Activated CD4-positive, alpha-beta T cell treated with anti-CD3 and anti-CD28 coated beads for 36 hours (primary cell): ENCODE measurements at regions of chr11 and their contacts with region 1.

Region 1: DNA sequence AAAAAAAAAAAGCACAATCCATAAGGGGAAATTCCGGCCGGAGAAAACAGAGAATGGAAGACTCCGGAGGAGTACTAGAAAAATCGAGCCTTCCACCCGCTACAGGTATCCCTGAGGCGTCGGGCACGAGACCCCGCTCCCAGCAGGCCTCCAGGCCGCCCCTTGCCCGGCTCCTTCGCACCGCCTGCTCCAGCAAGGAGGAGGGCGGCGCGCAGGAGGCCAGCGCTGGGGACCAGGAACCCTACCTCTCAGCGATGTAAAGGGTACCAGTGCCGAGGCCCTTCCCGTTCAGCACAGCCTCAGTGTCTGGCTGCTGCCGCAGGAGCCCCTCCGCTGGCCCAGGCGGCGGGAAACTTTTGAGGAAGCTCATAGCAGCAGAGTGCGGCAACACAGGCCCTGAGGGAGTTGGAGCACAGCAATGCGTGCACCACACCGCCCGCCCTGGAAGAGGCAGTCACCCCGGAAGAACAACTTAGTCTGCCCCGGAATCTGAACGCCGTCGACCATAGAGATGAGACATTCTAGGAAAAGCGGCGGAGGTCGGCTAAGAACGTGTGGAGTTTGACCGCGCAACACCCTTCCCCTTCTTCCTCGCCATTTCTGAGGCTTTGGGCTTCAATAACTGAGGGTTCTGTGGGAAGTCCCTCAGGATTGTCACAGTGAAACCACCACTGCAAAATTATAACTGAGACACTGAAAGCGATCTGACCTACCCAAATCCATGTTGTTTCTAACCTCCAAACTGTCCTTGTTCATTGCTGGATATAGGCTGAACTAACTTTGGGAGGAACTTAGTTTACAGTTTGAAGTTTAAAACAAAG is at the start of gene CLNS1A:
- DNase-seq: peak; percentile 91
- ATAC-seq: peak; percentile 98
- H3K4me3 Mint-ChIP-seq: peak within 1 kb of the TSS; percentile 85
- H3K27ac Mint-ChIP-seq: peak within 1 kb of the TSS; percentile 94
- H3K4me1 Mint-ChIP-seq: peaks cover 40% of the 10 kb centered on the region
- H3K27me3 Mint-ChIP-seq: no peaks in the 10 kb centered on the region
- total RNA-seq, gene CLNS1A: 185 to 212 TPM

Region 2: GRCh38 chr11:77047007-77047927 is 590.3 kb before region 1 on chr11:
- CTCF ChIA-PET with region 1: no interaction called
- POLR2A ChIA-PET with region 1: no interaction called
- intact Hi-C with region 1: no loop called
- DNase-seq: peak; percentile 82
- ATAC-seq: peak; percentile 95
- H3K4me3 Mint-ChIP-seq: peak overlapping the region; percentile 64
- H3K27ac Mint-ChIP-seq: peak overlapping the region; percentile 62
- H3K4me1 Mint-ChIP-seq: peaks cover 12% of the 10 kb centered on the region
- H3K27me3 Mint-ChIP-seq: no peaks in the 10 kb centered on the region

Region 3: DNA sequence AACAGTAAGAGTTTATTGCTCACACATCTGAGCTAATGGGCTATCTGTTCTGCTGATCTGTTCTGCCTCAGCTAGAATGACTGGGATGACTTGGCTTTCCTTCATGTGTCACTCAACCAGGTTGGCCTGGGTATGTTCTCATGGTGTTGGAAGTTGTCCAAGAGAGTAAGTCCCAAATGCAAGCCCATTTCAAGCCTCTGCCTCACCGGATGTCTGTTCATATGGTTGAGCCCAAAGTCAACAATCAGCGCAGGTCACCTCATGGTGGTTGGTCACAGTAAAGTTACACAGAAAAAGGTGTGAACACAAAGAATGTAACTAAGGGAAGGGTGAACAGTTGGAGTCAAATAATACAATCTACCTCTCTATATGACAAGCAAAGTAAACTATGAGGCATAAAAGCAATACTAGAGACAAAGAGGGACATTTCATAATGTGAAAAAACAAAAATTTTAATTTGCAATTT is 338.0 kb before region 1 on chr11:
- CTCF ChIA-PET with region 1: no interaction called
- POLR2A ChIA-PET with region 1: no interaction called
- intact Hi-C with region 1: no loop called
- DNase-seq: no peak
- ATAC-seq: peak; percentile 33
- H3K4me3 Mint-ChIP-seq: no peak overlapping the region
- H3K27ac Mint-ChIP-seq: no peak overlapping the region
- H3K4me1 Mint-ChIP-seq: peaks cover 3% of the 10 kb centered on the region
- H3K27me3 Mint-ChIP-seq: no peaks in the 10 kb centered on the region

Region 4: GRCh38 chr11:77473801-77474683 is 163.5 kb before region 1 on chr11 and contains the start of gene PAK1:
- CTCF ChIA-PET with region 1: no interaction called
- POLR2A ChIA-PET with region 1: no interaction called
- intact Hi-C with region 1: loop called in 1 of 2 experiments (anchors 5 kb)
- DNase-seq: peak; percentile 94
- ATAC-seq: peak; percentile 75
- H3K4me3 Mint-ChIP-seq: peak within 1 kb of the TSS; percentile 75
- H3K27ac Mint-ChIP-seq: peak within 1 kb of the TSS; percentile 77
- H3K4me1 Mint-ChIP-seq: peaks cover 4% of the 10 kb centered on the region
- H3K27me3 Mint-ChIP-seq: peaks cover 15% of the 10 kb centered on the region
- total RNA-seq, gene PAK1: 38.2 to 43.9 TPM

Region 5: DNA sequence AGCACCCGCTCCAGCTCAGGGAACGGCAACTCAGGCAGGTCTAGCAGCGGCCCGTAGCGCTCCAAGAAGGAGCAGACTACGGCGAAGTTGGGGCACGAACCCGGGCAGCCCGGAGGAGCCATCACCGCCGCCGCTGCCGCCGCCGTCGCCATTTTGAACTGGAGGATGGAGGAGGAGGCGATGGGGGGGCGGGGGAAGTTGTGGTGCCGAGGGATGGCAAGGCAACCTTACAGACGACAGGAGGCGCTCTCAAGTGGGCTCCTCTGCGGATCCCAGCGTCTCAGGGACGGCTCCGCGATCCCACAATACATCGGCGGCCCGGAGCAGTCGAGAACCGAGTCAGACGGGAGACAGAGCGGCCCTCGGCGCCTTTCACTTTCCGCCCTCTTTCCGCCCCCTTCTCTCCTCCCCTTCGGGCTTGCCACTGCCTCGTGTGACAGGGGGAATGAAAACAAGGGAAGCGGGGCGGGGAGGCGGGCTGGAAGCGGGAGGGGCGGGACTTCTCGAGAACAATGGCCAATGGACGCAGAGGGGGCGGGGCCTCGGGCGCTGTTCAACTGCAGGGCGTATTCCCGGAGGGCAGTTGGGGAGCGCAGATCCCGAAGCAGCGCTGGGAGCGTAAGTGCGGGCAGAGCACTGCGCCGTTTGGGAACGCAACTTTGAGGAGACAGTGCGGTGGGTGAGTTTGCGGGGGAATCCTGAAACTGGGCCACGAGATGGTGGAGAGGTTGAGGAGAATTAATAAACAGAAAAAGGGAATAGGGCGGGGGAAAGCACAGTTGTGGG is 183.2 kb after region 1 on chr11 and contains the starts of genes AAMDC and RSF1:
- CTCF ChIA-PET with region 1: no interaction called
- POLR2A ChIA-PET with region 1: no interaction called
- intact Hi-C with region 1: loop called (anchors 1 to 5 kb)
- DNase-seq: peak; percentile 99
- ATAC-seq: peak; percentile 88
- H3K4me3 Mint-ChIP-seq: peak within 1 kb of the TSS; percentile 97
- H3K27ac Mint-ChIP-seq: peak within 1 kb of the TSS; percentile 98
- H3K4me1 Mint-ChIP-seq: peaks cover 35% of the 10 kb centered on the region
- H3K27me3 Mint-ChIP-seq: no peaks in the 10 kb centered on the region
- total RNA-seq, gene AAMDC: 4.8 to 5.3 TPM
- total RNA-seq, gene RSF1: 49.9 to 59.2 TPM

Region 6: DNA sequence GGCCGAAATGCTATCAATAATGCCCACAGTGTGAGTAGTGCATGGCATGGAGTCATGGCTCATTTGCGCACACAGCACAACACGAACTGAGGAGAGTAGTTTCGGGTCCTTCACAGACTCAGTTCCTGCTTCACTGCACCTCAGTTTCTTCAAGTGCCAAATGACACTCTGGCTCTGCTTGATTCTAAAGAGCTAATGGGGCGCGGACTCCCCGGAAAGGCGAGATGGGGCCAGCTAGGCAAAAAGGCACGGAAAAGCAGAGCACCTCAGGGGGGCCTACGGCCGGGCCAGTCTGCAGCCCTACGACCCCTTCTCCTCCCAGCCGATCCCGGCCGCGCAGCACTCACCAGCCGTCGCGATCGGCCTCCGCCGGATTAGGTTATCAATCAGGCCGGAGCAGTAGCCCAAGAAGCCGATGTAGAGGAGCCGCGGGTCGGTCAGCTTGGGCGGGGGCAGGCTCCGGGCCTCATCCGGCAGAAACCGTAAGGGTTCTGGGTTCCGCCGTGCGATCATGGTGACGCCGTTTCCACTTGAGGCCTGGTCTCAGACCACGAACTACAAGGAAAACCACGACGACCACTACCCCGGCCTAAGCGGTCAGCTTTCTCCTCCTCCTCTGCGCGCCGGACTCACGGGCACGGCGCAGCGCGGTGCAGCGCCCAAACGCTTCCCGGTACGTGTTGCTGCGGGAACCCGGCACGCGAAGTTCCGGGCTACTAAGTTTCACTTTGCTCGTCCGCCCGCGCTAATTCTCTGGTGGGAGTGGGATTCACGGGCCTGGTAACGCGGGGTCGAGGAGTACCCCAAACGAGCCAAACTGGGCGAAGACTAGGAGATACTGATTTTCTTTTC is 441.9 kb after region 1 on chr11 and contains the start of gene NDUFC2:
- CTCF ChIA-PET with region 1: no interaction called
- POLR2A ChIA-PET with region 1: no interaction called
- intact Hi-C with region 1: loop called in 1 of 2 experiments (anchors 1 kb)
- DNase-seq: peak; percentile 81
- ATAC-seq: peak; percentile 83
- H3K4me3 Mint-ChIP-seq: peak within 1 kb of the TSS; percentile 91
- H3K27ac Mint-ChIP-seq: peak within 1 kb of the TSS; percentile 90
- H3K4me1 Mint-ChIP-seq: peaks cover 49% of the 10 kb centered on the region
- H3K27me3 Mint-ChIP-seq: no peaks in the 10 kb centered on the region
- total RNA-seq, gene NDUFC2: 214 to 236 TPM